Thyroid gland (tissue), 4 donors: ENCODE measurements at regions of chr2 and their contacts with region 1.

Region 1: GRCh38 chr2:169694113-169694903 is at the starts of genes CFAP210 and PHOSPHO2:
- DNase-seq: peak; percentile 100
- H3K4me3 ChIP-seq: peak within 1 kb of the TSS; percentile 71 to 77 (median 72)
- H3K27ac ChIP-seq: peak within 1 kb of the TSS; percentile 81 to 86 (median 85)
- H3K4me1 ChIP-seq: peaks cover 0 to 8% of the 10 kb centered on the region in 2 donors
- H3K27me3 ChIP-seq: no peaks in the 10 kb centered on the region
- CTCF ChIP-seq: no peak
- POLR2A ChIP-seq: peak in 1 of 2 donors; percentile 94
- total RNA-seq, gene CFAP210: 1.6 TPM in 2 of 4 donors, not detected in the others
- total RNA-seq, gene PHOSPHO2: 12.1 to 20.0 (median 13.2) TPM

Region 2: GRCh38 chr2:169641464-169641863 is 52.8 kb before region 1 on chr2:
- intact Hi-C with region 1: no loop called
- DNase-seq: no peak
- H3K4me3 ChIP-seq: no peak overlapping the region
- H3K27ac ChIP-seq: no peak overlapping the region
- H3K4me1 ChIP-seq: no peaks in the 10 kb centered on the region
- H3K27me3 ChIP-seq: no peaks in the 10 kb centered on the region
- CTCF ChIP-seq: no peak
- POLR2A ChIP-seq: no peak

Region 3: DNA sequence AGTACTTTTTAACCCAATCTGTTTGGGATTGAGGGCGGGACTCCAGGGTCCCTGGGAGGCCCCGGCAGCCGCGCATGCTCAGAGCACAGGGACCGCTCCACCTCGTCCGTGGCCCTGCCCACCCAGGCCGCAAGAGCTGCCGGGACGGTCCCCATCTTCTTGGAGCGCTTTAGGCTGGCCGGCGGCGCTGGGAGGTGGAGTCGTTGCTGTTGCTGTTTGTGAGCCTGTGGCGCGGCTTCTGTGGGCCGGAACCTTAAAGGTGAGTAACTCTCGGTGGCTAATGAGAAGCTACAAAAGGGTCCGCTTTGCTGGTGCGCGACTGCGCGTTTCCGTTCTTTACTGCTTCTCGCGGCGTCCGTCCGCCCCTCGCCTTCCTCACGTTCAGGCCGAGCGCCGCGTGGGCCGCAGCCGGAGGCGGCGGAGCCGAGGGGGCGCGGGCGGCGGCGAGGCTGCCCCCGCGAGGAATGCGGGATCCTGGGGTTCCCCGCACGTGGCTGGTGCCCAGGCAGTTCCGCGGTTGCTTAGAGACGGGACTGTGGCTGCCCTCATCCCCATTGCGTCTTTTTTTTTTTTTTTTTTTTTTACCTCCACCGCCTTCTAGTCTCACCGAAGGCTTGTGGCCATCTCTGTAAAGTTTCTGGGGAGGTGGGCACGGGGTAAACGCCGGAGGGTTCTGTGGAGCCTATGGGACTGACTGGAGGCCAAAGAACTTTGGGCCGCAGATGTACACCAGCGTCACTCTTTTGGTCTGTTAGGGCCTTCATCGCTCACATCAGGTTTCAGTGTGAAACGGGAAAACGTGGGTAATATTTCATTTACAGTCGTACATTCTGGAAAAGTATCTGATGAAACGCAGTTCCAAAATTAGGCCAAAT is 104.6 kb after region 1 on chr2 and contains the start of gene SSB:
- intact Hi-C with region 1: loop called (anchors 10 kb)
- DNase-seq: peak; percentile 94 to 95
- H3K4me3 ChIP-seq: peak within 1 kb of the TSS; percentile 19 to 54 (median 49)
- H3K27ac ChIP-seq: peak within 1 kb of the TSS; percentile 47 to 81 (median 80)
- H3K4me1 ChIP-seq: no peaks in the 10 kb centered on the region
- H3K27me3 ChIP-seq: no peaks in the 10 kb centered on the region
- CTCF ChIP-seq: peak in 1 of 6 experiments; percentile 14
- POLR2A ChIP-seq: peak; percentile 24 to 92
- total RNA-seq, gene SSB: 58.8 to 157 (median 102) TPM